ENCODE measurements at regions of chr19 and their contacts with region 1.

Region 1: DNA sequence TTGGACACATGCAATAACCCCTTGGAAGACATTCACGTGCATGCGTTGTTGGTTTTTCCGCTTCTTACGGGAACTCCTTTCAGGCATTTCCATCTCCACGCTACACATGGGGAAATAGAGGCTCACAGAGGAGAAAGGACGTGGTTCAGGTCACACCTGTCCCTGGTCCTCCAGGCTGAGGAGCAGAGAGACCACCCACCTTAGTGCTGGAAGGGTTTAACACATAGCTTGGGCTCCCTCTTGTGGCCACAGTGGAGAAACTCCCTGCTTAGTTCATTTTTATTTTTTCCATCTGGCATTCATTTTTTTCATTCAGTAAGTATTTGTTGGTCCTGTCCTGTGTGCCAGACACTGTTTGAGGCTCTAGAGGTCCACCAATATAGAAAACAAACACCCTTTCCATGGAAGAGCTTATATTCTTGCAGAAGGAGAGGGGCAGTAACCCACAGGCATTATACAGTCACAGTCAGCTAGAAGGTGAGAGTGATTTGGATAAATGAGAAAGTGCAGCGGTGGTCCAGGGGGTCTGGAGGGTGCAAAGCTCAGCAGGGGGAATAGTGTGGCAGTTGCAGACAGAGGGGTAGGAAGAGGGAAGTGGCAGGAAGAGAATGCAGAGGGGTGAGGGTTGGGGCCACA is 24.2 kb upstream of the TTYH1 start:
- DNase-seq: peak; percentile 85 to 91 (median 87)
- H3K4me3 ChIP-seq: peak overlapping the region in 2 of 7 experiments; percentile 0 to 8
- H3K27ac ChIP-seq: no peak overlapping the region
- H3K4me1 ChIP-seq: peaks cover 21 to 50% (median 46%) of the 10 kb centered on the region in 4 experiments
- H3K27me3 ChIP-seq: no peaks in the 10 kb centered on the region

Region 2: GRCh38 chr19:54266133-54266532 is 124.9 kb before region 1 on chr19:
- CTCF ChIA-PET with region 1: interaction called, 17 read pairs
- POLR2A ChIA-PET with region 1: no interaction called
- DNase-seq: peak; percentile 80 to 91 (median 86)
- H3K4me3 ChIP-seq: no peak overlapping the region
- H3K27ac ChIP-seq: no peak overlapping the region
- H3K4me1 ChIP-seq: peaks cover 0 to 2% (median under 1%) of the 10 kb centered on the region in 4 experiments
- H3K27me3 ChIP-seq: no peaks in the 10 kb centered on the region

Region 3: DNA sequence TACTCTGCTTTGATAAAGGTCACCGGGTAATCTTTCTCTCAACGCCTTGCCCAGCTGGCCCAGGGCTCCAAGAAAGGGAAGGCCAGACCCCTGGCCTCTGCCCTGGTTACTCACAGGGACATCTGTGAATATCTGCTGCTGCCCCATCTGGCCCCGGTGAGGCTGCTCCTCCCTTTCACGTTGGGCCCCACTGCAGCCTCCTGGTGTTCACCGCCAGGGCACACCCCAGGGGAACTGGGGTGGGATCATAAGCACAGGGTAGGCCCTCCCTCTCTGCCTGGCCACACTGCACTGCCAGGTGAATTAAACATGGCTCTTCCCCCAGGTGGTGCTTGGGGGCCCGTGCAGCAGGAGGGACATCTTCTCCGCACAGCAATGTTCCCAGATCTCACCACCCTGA is 39.0 kb before region 1 on chr19:
- CTCF ChIA-PET with region 1: interaction called, 95 read pairs
- POLR2A ChIA-PET with region 1: no interaction called
- DNase-seq: peak in 2 of 3 donors; percentile 46 to 54
- H3K4me3 ChIP-seq: peak overlapping the region in 1 of 7 experiments; percentile 31
- H3K27ac ChIP-seq: peak overlapping the region in 1 of 2 experiments; percentile 22
- H3K4me1 ChIP-seq: peaks cover 9 to 40% (median 22%) of the 10 kb centered on the region in 4 experiments
- H3K27me3 ChIP-seq: no peaks in the 10 kb centered on the region

Region 4: GRCh38 chr19:54373781-54374631 is 17.1 kb before region 1 on chr19:
- CTCF ChIA-PET with region 1: interaction called, 61 read pairs
- POLR2A ChIA-PET with region 1: interaction called, 15 read pairs
- DNase-seq: peak in 2 of 3 donors; percentile 85 to 87
- H3K4me3 ChIP-seq: peak overlapping the region in 2 of 7 experiments; percentile 16 to 19
- H3K27ac ChIP-seq: no peak overlapping the region
- H3K4me1 ChIP-seq: peaks cover 42 to 84% (median 76%) of the 10 kb centered on the region in 4 experiments
- H3K27me3 ChIP-seq: no peaks in the 10 kb centered on the region

Region 5: GRCh38 chr19:54439174-54439853 is 48.3 kb after region 1 on chr19:
- CTCF ChIA-PET with region 1: interaction called, 10 read pairs
- POLR2A ChIA-PET with region 1: interaction called, 3 read pairs
- DNase-seq: peak; percentile 47 to 71 (median 68)
- H3K4me3 ChIP-seq: no peak overlapping the region
- H3K27ac ChIP-seq: no peak overlapping the region
- H3K4me1 ChIP-seq: peaks cover 0 to 12% (median 2%) of the 10 kb centered on the region in 4 experiments
- H3K27me3 ChIP-seq: peaks cover 0 to 4% (median 0%) of the 10 kb centered on the region in 5 experiments

Measured in common myeloid progenitor, CD34-positive (primary cell).